Posterior cingulate gyrus (tissue), 11 donors: ENCODE measurements at regions of chr1 and their contacts with region 1.

Region 1: DNA sequence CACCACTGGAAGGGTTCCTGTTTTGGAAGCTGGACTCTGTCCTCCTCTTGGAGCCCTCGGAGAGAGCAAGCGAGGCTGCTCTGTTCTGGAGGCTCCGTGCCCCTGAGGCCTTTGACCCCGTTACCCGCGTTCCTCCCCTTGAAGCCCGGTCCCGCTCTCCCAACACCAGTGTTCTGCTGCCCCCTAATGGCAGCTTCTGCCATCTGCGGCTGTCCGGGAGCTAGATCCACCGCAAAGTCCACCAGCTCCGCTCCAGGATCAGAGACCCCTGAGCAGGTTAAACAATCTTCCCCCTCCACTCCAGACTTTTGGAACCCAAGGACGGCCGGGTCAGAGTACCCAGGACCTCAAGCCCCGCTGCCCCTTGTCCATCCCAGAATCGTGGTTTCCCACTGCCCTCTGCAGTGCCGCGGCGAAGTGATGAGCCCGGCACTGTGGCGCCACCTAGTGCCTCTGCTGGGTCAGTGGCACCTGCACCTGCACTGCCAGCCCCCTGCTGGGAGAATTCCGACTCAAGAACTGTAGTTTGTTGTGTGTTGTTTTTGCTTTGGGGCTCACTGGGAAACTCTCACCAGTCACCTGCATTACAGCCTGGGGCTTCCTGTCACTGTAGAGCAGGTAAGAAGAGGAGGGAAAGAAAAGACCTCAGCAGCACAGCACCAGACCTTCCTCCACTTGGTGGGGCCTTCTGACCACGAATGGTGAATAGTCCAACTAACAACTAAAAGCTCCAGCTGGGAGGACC is 63.5 kb upstream of the NFASC start:
- DNase-seq: peak; percentile 64 to 97 (median 86)

Region 2: DNA sequence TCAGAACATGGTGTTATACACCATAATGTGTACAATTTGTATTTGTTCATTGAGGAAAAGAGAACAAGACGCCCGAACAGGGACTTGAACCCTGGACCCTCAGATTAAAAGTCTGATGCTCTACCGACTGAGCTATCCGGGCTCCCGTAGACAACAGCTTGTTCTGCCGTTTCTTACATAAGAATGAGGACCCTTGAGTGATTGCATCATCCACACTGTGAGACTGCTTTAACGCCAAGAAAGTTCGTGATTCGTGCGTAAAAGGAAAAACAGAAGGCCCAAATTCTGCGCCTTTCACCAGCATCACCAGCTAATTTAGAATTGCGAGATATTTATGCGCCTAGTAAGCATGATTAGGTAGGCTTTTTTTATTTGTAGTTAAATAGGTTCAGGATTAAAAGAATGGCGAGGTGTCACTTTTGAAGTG is 300.1 kb before region 1 on chr1:
- intact Hi-C with region 1: loop called (anchors 2 kb)
- DNase-seq: peak in 8 of 10 donors; percentile 58 to 93 (median 78)

Region 3: GRCh38 chr1:204565617-204566582 is 241.2 kb before region 1 on chr1:
- intact Hi-C with region 1: loop called (anchors 1 kb)
- DNase-seq: peak in 8 of 10 donors; percentile 39 to 91 (median 62)

Region 4: GRCh38 chr1:204941421-204942338 is 134.6 kb after region 1 on chr1:
- intact Hi-C with region 1: loop called (anchors 5 kb)
- DNase-seq: peak; percentile 61 to 97 (median 81)